Activated T-helper 1 cell treated with anti-CD3 and anti-CD28 coated beads, Interleukin-12 subunit alpha, Interleukin-12 subunit beta, Interleukin-2, Interleukin-4 antibody, amounts not matched to agents 30 ng/mL and 10 ng/mL and 1 ng/mL, durations not matched to agents 14 hours and 24 hours and 36 hours (primary cell): ENCODE measurements at regions of chr14 and their contacts with region 1.

Region 1: DNA sequence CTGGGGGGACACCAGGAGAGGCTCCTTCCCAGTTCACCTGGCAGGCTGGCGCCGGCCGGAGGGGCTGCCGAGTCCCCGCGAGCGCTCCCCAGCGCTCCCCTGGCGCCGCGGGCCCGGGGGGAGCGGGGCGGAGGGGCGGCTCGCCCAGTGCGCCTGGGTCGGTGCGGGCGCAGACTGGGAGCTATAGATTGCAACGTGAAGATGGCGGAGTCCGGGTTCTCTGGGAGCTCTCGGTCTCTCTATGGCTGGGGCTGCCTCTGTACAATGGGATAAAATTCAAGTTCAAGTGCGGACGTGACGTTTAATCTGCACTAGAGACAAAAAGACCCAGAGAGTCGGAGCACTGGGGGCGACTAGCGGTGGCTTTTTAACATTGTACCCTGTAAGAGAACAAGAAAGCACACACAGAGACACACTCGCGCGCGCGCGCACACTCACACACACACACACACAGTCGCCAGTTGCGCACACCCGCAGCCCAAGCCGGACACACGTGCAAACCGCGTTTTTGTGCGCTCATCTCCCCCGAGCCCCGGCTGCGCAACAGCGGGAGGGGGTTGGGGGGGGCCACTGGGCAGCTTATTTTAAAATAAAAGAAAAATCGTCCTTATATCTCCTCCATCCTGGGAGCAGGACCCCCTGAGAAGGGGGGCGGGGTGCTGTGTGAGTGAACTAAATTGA is at the start of gene BCL11B:
- DNase-seq: peak; percentile 84
- H3K4me3 Mint-ChIP-seq: peak within 1 kb of the TSS; percentile 93
- H3K27ac Mint-ChIP-seq: peak within 1 kb of the TSS; percentile 93
- H3K4me1 Mint-ChIP-seq: peaks cover 38% of the 10 kb centered on the region
- H3K27me3 Mint-ChIP-seq: peaks cover 8% of the 10 kb centered on the region
- total RNA-seq, gene BCL11B: 43.5 and 45.4 TPM in 2 replicates

Region 2: DNA sequence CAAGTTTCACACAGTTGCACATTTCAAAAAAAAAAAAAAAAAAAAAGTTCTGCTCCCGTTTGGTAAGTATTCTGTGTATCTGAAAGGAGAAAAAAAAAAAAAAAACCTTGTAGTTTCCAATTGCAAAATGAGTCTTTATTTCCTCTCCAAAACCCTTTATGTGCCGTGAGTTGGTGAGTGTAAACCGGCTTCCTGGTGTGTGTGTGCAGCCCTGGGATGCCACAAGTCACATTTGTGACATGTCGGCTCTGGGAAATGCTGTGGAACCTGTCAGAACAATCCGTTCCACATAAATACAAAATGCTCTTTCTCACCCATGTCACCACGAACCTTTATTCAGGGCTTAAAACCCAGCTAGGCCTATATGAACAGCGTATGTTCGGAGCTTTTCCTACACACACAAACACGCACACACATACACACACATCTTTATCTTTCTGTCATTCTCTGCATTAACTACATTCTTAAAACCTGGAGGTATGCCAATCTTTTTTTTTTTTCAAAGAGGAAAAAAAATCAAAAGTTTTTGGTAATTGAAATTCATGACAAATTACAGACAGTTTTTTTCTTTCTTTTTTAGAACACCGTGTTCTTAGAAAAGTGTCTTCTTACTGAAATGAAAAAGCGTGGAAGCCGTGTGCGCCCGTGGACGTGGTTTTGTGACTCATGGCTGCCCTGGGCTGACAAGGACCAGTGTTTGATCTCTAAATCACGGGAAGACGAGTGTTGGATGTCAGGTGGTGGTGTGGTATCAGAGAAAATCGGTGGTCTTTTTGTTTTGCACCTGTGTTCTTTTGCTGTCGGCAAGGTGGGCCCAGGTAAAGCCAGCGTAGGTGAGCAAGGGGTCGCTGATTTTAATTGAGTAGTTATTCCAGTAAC is 1862.9 kb before region 1 on chr14:
- intact Hi-C with region 1: loop called (anchors 2 kb)
- DNase-seq: peak; percentile 24
- H3K4me3 Mint-ChIP-seq: peak overlapping the region; percentile 68
- H3K27ac Mint-ChIP-seq: peak overlapping the region; percentile 88
- H3K4me1 Mint-ChIP-seq: peaks cover 32% of the 10 kb centered on the region
- H3K27me3 Mint-ChIP-seq: peaks cover 4% of the 10 kb centered on the region

Region 3: DNA sequence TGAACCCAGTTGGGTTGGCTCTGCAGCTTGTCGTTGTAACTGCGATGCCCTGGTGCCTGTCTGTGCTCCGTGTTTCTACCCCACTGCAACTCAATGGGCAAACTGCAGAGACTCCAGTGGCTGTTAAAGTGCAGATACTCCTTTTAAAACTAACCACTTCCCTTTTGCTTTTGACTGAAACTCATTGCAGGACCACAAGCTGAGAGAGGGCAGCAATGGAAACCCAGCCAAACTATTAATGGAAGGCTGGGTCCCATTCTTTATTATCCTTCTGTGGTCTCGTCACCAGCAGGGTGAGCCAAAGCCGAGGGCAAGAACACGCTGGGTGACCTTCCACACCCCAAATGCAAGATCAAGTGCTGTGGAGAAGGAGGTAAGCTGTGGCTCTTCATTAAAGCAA is 1564.5 kb before region 1 on chr14:
- intact Hi-C with region 1: loop called (anchors 5 kb)
- DNase-seq: no peak
- H3K4me3 Mint-ChIP-seq: peak overlapping the region; percentile 9
- H3K27ac Mint-ChIP-seq: no peak overlapping the region
- H3K4me1 Mint-ChIP-seq: peaks cover 79% of the 10 kb centered on the region
- H3K27me3 Mint-ChIP-seq: no peaks in the 10 kb centered on the region

Region 4: GRCh38 chr14:98234208-98234607 is 1037.9 kb before region 1 on chr14:
- intact Hi-C with region 1: loop called (anchors 2 kb)
- DNase-seq: no peak
- H3K4me3 Mint-ChIP-seq: no peak overlapping the region
- H3K27ac Mint-ChIP-seq: no peak overlapping the region
- H3K4me1 Mint-ChIP-seq: peaks cover 34% of the 10 kb centered on the region
- H3K27me3 Mint-ChIP-seq: no peaks in the 10 kb centered on the region

Region 5: DNA sequence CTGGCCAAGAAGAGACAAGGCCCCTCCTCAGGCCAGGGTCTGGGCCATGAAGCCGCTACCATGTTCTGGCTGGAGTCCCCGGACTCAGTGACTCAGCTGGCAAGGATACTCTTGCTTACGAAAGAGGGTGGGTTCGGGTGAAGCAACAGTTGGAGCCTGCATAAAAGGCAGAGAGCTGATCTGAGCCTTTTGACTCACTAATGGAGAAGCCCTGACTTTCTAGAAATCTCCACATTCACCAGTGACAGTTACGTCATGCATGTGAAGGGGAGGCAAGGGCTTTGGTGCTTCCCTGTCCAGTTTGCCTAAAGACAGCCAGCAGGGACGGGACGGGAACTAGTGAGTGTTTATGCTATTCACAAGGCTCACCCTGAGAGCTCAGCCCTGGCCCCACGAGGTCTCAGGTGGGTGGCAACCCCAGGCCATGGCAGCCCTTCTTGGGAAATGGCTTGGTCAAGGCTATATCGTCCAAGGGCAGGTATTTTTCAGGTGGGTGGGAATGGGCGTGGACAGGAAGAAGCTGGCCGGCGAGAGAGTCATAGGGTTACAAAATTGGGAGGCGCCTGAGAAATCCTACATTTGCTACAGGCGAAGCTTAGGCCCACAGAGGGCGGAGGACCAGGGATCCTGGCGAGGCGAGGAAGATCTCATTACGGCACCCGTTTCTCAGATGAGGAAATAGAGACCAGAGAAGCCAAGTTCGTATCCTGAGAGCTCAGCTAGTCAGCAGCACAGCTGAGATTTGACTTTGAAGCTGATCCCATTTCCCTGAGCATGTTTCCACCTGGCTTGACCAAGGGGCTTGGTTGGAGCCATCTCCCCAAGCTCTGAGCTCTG is 314.7 kb before region 1 on chr14:
- intact Hi-C with region 1: no loop called
- DNase-seq: no peak
- H3K4me3 Mint-ChIP-seq: no peak overlapping the region
- H3K27ac Mint-ChIP-seq: no peak overlapping the region
- H3K4me1 Mint-ChIP-seq: no peaks in the 10 kb centered on the region
- H3K27me3 Mint-ChIP-seq: peaks cover under 1% of the 10 kb centered on the region

Region 6: GRCh38 chr14:99230208-99231151 is 41.6 kb before region 1 on chr14:
- intact Hi-C with region 1: no loop called
- DNase-seq: peak; percentile 82
- H3K4me3 Mint-ChIP-seq: peak overlapping the region; percentile 78
- H3K27ac Mint-ChIP-seq: peak overlapping the region; percentile 98
- H3K4me1 Mint-ChIP-seq: peaks cover 89% of the 10 kb centered on the region
- H3K27me3 Mint-ChIP-seq: no peaks in the 10 kb centered on the region

Region 7: GRCh38 chr14:99415496-99416281 is 143.6 kb after region 1 on chr14:
- intact Hi-C with region 1: loop called (anchors 1 kb)
- DNase-seq: peak; percentile 55
- H3K4me3 Mint-ChIP-seq: no peak overlapping the region
- H3K27ac Mint-ChIP-seq: no peak overlapping the region
- H3K4me1 Mint-ChIP-seq: peaks cover 26% of the 10 kb centered on the region
- H3K27me3 Mint-ChIP-seq: no peaks in the 10 kb centered on the region

Region 8: DNA sequence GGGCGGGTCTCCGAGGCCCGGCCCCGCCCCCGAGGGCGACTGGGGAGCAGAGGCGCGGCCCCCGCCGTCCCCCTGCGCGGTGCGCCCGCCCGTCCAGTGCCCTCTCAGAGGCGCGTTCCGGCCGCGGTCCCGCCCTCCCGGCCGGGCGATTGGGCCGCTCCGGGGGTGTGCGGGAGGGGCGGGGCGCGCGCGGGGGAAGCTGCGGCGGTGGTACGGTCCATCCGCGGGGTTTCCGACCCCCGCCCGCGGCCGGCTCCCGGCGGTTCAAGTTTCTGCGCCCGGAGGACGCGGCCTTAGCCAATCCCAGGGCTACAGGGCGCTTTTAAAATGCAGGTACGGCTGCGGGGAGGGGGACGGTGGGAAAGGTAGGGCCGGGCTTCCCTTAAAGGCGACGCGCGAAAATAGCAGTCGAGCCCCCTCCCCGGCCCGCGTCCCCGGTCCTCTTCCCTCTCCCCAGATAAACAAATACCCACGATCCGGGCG is 332.2 kb after region 1 on chr14:
- intact Hi-C with region 1: loop called (anchors 5 kb)
- DNase-seq: peak; percentile 96
- H3K4me3 Mint-ChIP-seq: peak overlapping the region; percentile 88
- H3K27ac Mint-ChIP-seq: peak overlapping the region; percentile 88
- H3K4me1 Mint-ChIP-seq: peaks cover 24% of the 10 kb centered on the region
- H3K27me3 Mint-ChIP-seq: peaks cover 12% of the 10 kb centered on the region

Region 9: DNA sequence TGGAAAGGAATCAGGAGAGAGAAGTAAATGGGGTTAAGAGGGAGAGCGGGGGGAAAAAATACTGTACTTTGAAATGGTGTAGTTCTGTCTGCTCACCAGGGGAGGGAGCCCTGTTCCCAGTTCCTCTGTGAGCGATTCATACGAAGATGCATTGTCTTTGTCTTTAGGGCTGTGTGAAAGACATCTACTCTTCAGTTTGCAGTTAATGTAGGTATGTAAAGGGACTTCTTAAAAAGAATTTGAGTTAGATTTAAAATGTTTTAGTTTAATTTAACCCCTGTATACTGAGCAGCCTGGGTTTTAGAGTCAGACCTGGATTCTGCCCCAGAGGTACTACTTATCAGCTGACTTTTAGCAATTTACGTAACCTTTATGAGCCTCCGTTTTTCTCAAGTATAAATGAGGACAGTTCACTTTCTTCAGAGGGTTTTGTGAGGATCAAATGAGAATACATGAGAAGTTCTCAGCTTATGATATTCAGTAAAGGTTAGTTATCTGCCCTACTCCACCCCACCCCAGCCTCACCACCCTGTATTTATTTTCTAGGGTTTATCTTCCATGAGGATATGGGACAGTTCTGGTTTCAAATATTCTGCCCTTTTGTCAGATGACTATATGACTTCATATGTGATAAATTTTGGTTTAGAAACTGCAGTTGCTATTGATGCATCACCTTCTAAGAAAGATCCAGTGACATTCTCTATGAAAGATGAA is 710.6 kb after region 1 on chr14:
- intact Hi-C with region 1: no loop called
- DNase-seq: peak; percentile 36
- H3K4me3 Mint-ChIP-seq: no peak overlapping the region
- H3K27ac Mint-ChIP-seq: no peak overlapping the region
- H3K4me1 Mint-ChIP-seq: peaks cover 25% of the 10 kb centered on the region
- H3K27me3 Mint-ChIP-seq: no peaks in the 10 kb centered on the region